Heart left ventricle (tissue), 16 donors: ENCODE measurements at regions of chr3 and their contacts with region 1.

Region 1: GRCh38 chr3:97613139-97613538 is 151.4 kb upstream of the ARL6 start:
- DNase-seq: no peak
- ATAC-seq: no peak
- H3K4me3 ChIP-seq: no peak overlapping the region
- H3K27ac ChIP-seq: no peak overlapping the region
- H3K4me1 ChIP-seq: no peaks in the 10 kb centered on the region
- H3K27me3 ChIP-seq: peaks cover 0 to 3% (median 0%) of the 10 kb centered on the region in 9 donors
- CTCF ChIP-seq: no peak
- POLR2A ChIP-seq: no peak

Region 2: DNA sequence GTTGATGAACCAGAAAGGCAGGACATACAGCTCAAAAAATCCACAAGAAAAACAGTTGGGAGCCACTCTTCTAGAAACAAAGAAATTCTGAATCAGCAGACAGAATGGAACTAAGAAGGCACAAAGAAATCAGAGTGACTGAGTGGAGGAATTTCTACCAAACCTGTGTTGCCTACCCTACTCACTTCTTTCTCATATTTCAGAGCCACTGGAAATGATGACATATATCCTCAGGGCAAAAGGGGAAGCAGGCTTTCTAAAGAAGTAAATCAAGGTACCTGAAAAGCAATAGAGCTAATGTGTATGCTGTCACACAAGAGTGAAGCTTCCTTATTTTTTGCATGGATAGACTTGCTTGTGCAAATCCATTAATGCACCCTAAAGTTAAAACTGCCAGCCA is 53.8 kb before region 1 on chr3:
- intact Hi-C with region 1: loop called in 1 of 10 experiments (anchors 10 kb)
- DNase-seq: no peak
- ATAC-seq: no peak
- H3K4me3 ChIP-seq: no peak overlapping the region
- H3K27ac ChIP-seq: no peak overlapping the region
- H3K4me1 ChIP-seq: no peaks in the 10 kb centered on the region
- H3K27me3 ChIP-seq: no peaks in the 10 kb centered on the region
- CTCF ChIP-seq: no peak
- POLR2A ChIP-seq: no peak

Region 3: GRCh38 chr3:97579365-97579764 is 33.8 kb before region 1 on chr3:
- intact Hi-C with region 1: no loop called
- DNase-seq: no peak
- ATAC-seq: no peak
- H3K4me3 ChIP-seq: no peak overlapping the region
- H3K27ac ChIP-seq: no peak overlapping the region
- H3K4me1 ChIP-seq: no peaks in the 10 kb centered on the region
- H3K27me3 ChIP-seq: no peaks in the 10 kb centered on the region
- CTCF ChIP-seq: no peak
- POLR2A ChIP-seq: no peak